Heart right ventricle (tissue), 16 donors: ENCODE measurements at regions of chr6 and their contacts with region 1.

Region 1: DNA sequence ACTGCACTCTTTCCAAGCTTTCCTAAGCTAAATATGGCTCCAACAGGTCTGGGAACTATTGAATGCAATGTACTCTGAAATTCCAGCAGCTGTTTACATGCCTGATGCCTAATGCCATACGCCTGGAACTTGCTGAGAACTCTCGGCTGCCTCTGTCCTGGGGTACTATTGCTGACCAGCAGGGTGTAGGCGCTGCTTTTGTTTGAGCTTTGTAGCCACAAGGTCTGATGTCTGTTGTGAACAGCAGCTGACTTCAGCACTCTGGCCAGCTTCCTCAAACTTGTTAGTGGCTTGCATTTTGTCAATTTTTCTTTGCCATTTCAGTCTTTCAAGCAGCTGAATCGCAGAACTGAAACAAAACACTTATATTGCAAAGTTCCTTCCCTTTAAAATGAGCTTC is 26.7 kb downstream of the SAYSD1 start:
- DNase-seq: peak in 1 of 2 donors; percentile 55
- ATAC-seq: peak; percentile 80 to 94 (median 89)
- H3K4me3 ChIP-seq: no peak overlapping the region
- H3K27ac ChIP-seq: no peak overlapping the region
- H3K4me1 ChIP-seq: peaks cover 0 to 16% (median 12%) of the 10 kb centered on the region in 9 donors
- H3K27me3 ChIP-seq: peaks cover 0 to 37% (median 3%) of the 10 kb centered on the region in 7 donors
- CTCF ChIP-seq: peak in 7 of 9 donors; percentile 38 to 67 (median 61)

Region 2: GRCh38 chr6:38973178-38974054 is 114.9 kb before region 1 on chr6:
- intact Hi-C with region 1: loop called in 2 of 10 experiments (anchors 5 to 10 kb)
- DNase-seq: peak in 1 of 2 donors; percentile 14
- ATAC-seq: peak in 7 of 8 donors; percentile 38 to 80 (median 64)
- H3K4me3 ChIP-seq: no peak overlapping the region
- H3K27ac ChIP-seq: no peak overlapping the region
- H3K4me1 ChIP-seq: peaks cover 0 to 16% (median 0%) of the 10 kb centered on the region in 9 donors
- H3K27me3 ChIP-seq: peaks cover 0 to 15% (median 7%) of the 10 kb centered on the region in 7 donors
- CTCF ChIP-seq: peak; percentile 23 to 76 (median 59)

Region 3: GRCh38 chr6:39296745-39297640 is 208.7 kb after region 1 on chr6:
- intact Hi-C with region 1: loop called in 9 of 10 experiments (anchors 2 to 5 kb)
- DNase-seq: peak in 1 of 2 donors; percentile 41
- ATAC-seq: peak; percentile 41 to 94 (median 70)
- H3K4me3 ChIP-seq: no peak overlapping the region
- H3K27ac ChIP-seq: no peak overlapping the region
- H3K4me1 ChIP-seq: peaks cover 0 to 15% (median 0%) of the 10 kb centered on the region in 9 donors
- H3K27me3 ChIP-seq: peaks cover 0 to 62% (median 17%) of the 10 kb centered on the region in 7 donors
- CTCF ChIP-seq: no peak

Region 4: GRCh38 chr6:39309942-39310531 is 221.7 kb after region 1 on chr6:
- intact Hi-C with region 1: loop called in 1 of 10 experiments (anchors 5 kb)
- DNase-seq: peak; percentile 53 to 71
- ATAC-seq: peak; percentile 66 to 80 (median 75)
- H3K4me3 ChIP-seq: no peak overlapping the region
- H3K27ac ChIP-seq: no peak overlapping the region
- H3K4me1 ChIP-seq: peaks cover 4 to 17% (median 15%) of the 10 kb centered on the region in 9 donors
- H3K27me3 ChIP-seq: peaks cover 0 to 54% (median 41%) of the 10 kb centered on the region in 7 donors
- CTCF ChIP-seq: peak; percentile 70 to 90 (median 86)